Activated naive CD4-positive, alpha-beta T cell treated with anti-CD3 and anti-CD28 coated beads for 36 hours (primary cell): ENCODE measurements at regions of chr5 and their contacts with region 1.

Region 1: GRCh38 chr5:126449751-126450271 is 26.6 kb downstream of the GRAMD2B start:
- DNase-seq: peak; percentile 90
- H3K4me3 Mint-ChIP-seq: peak overlapping the region; percentile 82
- H3K27ac Mint-ChIP-seq: peak overlapping the region; percentile 100
- H3K4me1 Mint-ChIP-seq: peaks cover 81% of the 10 kb centered on the region
- H3K27me3 Mint-ChIP-seq: no peaks in the 10 kb centered on the region

Region 2: GRCh38 chr5:126422989-126423788 is 26.6 kb before region 1 on chr5 and contains the start of gene GRAMD2B:
- CTCF ChIA-PET with region 1: interaction called, 17 read pairs
- intact Hi-C with region 1: loop called (anchors 1 kb)
- DNase-seq: peak; percentile 87
- H3K4me3 Mint-ChIP-seq: peak within 1 kb of the TSS; percentile 81
- H3K27ac Mint-ChIP-seq: peak within 1 kb of the TSS; percentile 88
- H3K4me1 Mint-ChIP-seq: peaks cover 29% of the 10 kb centered on the region
- H3K27me3 Mint-ChIP-seq: no peaks in the 10 kb centered on the region
- total RNA-seq, gene GRAMD2B: 8.7 to 10.8 TPM

Region 3: GRCh38 chr5:126471875-126472537 is 22.2 kb after region 1 on chr5:
- CTCF ChIA-PET with region 1: no interaction called
- intact Hi-C with region 1: loop called (anchors 2 kb)
- DNase-seq: no peak
- H3K4me3 Mint-ChIP-seq: no peak overlapping the region
- H3K27ac Mint-ChIP-seq: no peak overlapping the region
- H3K4me1 Mint-ChIP-seq: peaks cover 7% of the 10 kb centered on the region
- H3K27me3 Mint-ChIP-seq: no peaks in the 10 kb centered on the region

Region 4: GRCh38 chr5:126482591-126482990 is 32.8 kb after region 1 on chr5:
- CTCF ChIA-PET with region 1: no interaction called
- intact Hi-C with region 1: no loop called
- DNase-seq: no peak
- H3K4me3 Mint-ChIP-seq: no peak overlapping the region
- H3K27ac Mint-ChIP-seq: no peak overlapping the region
- H3K4me1 Mint-ChIP-seq: no peaks in the 10 kb centered on the region
- H3K27me3 Mint-ChIP-seq: no peaks in the 10 kb centered on the region

Region 5: DNA sequence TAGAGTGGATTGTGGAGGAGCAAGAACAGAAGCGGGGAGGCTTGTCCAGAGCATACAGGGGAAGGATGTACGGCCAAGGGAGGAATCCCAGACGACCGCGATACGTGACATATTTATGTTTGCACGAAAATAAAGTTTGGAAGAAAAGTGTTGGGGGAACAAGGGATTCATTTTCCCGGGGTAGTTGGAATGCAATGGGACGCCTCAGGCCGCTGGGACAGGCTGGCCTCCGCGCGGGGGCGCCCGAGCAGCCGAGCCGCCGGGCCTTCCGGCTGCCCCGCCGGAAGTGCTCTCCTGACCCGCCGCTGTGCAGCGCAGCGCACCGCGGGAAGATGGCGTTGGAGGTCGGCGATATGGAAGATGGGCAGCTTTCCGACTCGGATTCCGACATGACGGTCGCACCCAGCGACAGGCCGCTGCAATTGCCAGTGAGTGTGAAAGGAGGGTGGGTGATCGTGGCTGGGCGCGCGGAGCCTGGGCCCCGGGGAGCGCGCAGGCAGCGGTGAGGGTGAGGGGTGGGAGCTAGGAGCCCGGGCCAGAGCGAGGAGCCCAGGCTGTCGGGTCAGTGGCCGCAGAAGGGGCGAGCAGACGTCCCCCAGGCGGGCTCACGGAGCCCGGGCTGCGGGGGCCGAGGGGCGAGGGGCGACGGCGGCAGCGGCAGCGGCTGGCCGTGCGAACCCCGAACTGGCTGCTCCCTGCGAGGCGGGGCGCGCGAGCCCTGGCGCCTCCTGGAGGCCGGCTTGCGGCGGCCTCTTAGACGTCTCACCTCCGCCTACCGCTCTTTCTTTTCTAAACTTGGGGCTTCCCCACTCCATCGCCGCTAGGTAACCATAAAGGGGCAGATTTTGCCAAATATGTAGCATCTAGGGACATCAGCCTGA is 151.1 kb after region 1 on chr5 and contains the start of gene PHAX:
- CTCF ChIA-PET with region 1: no interaction called
- intact Hi-C with region 1: loop called (anchors 1 kb)
- DNase-seq: peak; percentile 78
- H3K4me3 Mint-ChIP-seq: peak within 1 kb of the TSS; percentile 90
- H3K27ac Mint-ChIP-seq: peak within 1 kb of the TSS; percentile 93
- H3K4me1 Mint-ChIP-seq: peaks cover 34% of the 10 kb centered on the region
- H3K27me3 Mint-ChIP-seq: no peaks in the 10 kb centered on the region
- total RNA-seq, gene PHAX: 34.9 to 37.2 TPM

Region 6: GRCh38 chr5:126808521-126808988 is 358.7 kb after region 1 on chr5:
- CTCF ChIA-PET with region 1: no interaction called
- intact Hi-C with region 1: loop called (anchors 1 kb)
- DNase-seq: no peak
- H3K4me3 Mint-ChIP-seq: no peak overlapping the region
- H3K27ac Mint-ChIP-seq: peak overlapping the region; percentile 98
- H3K4me1 Mint-ChIP-seq: peaks cover 60% of the 10 kb centered on the region
- H3K27me3 Mint-ChIP-seq: no peaks in the 10 kb centered on the region